ENCODE measurements at regions of chr17 and their contacts with region 1.

Region 1: GRCh38 chr17:79053251-79053925 is 21.2 kb upstream of the ENGASE start:
- DNase-seq: no peak
- H3K4me3 ChIP-seq: no peak overlapping the region
- H3K27ac ChIP-seq: no peak overlapping the region
- H3K4me1 ChIP-seq: peaks cover 5% of the 10 kb centered on the region
- H3K27me3 ChIP-seq: peaks cover 0 to 4% of the 10 kb centered on the region in 2 experiments
- CTCF ChIP-seq: no peak
- POLR2A ChIP-seq: no peak

Region 2: GRCh38 chr17:78970834-78971773 is 82.3 kb before region 1 on chr17:
- CTCF ChIA-PET with region 1: no interaction called
- POLR2A ChIA-PET with region 1: no interaction called
- dilution Hi-C with region 1: no loop called
- intact Hi-C with region 1: no loop called
- DNase-seq: peak; percentile 74
- H3K4me3 ChIP-seq: no peak overlapping the region
- H3K27ac ChIP-seq: no peak overlapping the region
- H3K4me1 ChIP-seq: no peaks in the 10 kb centered on the region
- H3K27me3 ChIP-seq: no peaks in the 10 kb centered on the region
- CTCF ChIP-seq: peak; percentile 76 to 83
- POLR2A ChIP-seq: no peak

Region 3: DNA sequence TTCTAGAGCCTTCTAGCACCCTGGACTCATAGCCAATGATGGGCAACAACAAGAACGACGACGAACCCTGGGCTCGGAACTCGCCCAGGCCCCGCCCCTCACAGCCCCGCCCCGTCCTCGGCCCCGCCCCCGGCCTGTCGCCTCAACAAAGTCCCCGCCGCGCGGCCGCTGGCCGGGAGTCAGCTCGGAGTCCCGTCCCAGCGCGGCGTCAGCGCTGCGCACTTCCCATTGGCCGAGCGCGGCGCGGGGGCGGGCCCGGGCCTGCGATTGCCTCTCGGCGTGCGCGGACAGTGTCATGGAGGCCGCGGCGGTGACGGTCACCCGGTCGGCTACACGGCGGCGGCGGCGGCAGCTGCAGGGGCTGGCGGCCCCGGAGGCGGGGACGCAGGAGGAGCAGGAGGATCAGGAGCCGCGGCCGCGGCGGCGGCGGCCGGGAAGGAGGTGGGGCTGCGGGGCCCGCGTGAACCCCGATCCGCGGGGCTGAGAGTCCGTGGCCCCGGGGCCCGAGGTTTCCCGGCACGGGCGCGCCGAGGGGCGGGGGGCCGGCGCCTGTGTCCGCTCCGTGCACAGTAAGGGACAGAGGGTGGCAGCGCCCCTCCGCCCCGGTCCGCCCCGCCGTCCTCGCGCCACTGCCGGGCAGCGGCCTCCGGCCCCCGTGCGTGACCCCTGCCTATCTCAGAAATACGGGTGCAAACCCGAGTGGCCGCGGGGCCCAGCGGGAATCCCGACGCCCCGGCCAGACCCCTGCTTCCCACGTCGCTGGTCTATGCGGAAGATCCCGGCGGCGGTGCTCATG is 21.5 kb after region 1 on chr17 and contains the start of gene ENGASE:
- CTCF ChIA-PET with region 1: no interaction called
- POLR2A ChIA-PET with region 1: no interaction called
- dilution Hi-C with region 1: no loop called
- intact Hi-C with region 1: loop called (anchors 2 kb)
- DNase-seq: peak; percentile 90
- H3K4me3 ChIP-seq: peak within 1 kb of the TSS; percentile 48 to 76 (median 71)
- H3K27ac ChIP-seq: no peak within 1 kb of the TSS
- H3K4me1 ChIP-seq: peaks cover 8% of the 10 kb centered on the region
- H3K27me3 ChIP-seq: peaks cover 2 to 4% of the 10 kb centered on the region in 2 experiments
- CTCF ChIP-seq: no peak
- POLR2A ChIP-seq: peak; percentile 38
- total RNA-seq, gene ENGASE: 20.8 and 27.2 TPM in 2 replicates

Measured in endothelial cell of umbilical vein (primary cell).